CD4-positive, alpha-beta memory T cell (primary cell): ENCODE measurements at regions of chr1 and their contacts with region 1.

Region 1: GRCh38 chr1:111507411-111508201 is 4.2 kb upstream of the ADORA3 start:
- DNase-seq: peak; percentile 48 to 78 (median 49)
- H3K4me3 ChIP-seq: peak overlapping the region; percentile 31 to 50
- H3K4me3 Mint-ChIP-seq: peak overlapping the region; percentile 63 to 89 (median 86)
- H3K27ac ChIP-seq: peak overlapping the region; percentile 76
- H3K27ac Mint-ChIP-seq: peak overlapping the region in 6 of 7 donors; percentile 93 to 98 (median 96)
- H3K4me1 ChIP-seq: peaks cover 96% of the 10 kb centered on the region
- H3K4me1 Mint-ChIP-seq: peaks cover 41 to 61% (median 53%) of the 10 kb centered on the region in 4 donors
- H3K27me3 ChIP-seq: no peaks in the 10 kb centered on the region
- H3K27me3 Mint-ChIP-seq: no peaks in the 10 kb centered on the region

Region 2: GRCh38 chr1:111448918-111449702 is 58.5 kb before region 1 on chr1 and contains the starts of genes ATP5PB and WDR77:
- CTCF ChIA-PET with region 1: interaction called, 44 read pairs
- POLR2A ChIA-PET with region 1: interaction called, 45 read pairs
- intact Hi-C with region 1: loop called (anchors 2 kb)
- DNase-seq: peak; percentile 94 to 97 (median 96)
- H3K4me3 ChIP-seq: peak within 1 kb of the TSS; percentile 78 to 96
- H3K4me3 Mint-ChIP-seq: peak within 1 kb of the TSS; percentile 98 to 100 (median 99)
- H3K27ac ChIP-seq: peak within 1 kb of the TSS; percentile 91
- H3K27ac Mint-ChIP-seq: peak within 1 kb of the TSS; percentile 94 to 100 (median 99)
- H3K4me1 ChIP-seq: peaks cover 77% of the 10 kb centered on the region
- H3K4me1 Mint-ChIP-seq: peaks cover 57 to 87% (median 71%) of the 10 kb centered on the region in 4 donors
- H3K27me3 ChIP-seq: no peaks in the 10 kb centered on the region
- H3K27me3 Mint-ChIP-seq: no peaks in the 10 kb centered on the region
- total RNA-seq, gene ATP5PB: 103 to 112 TPM
- total RNA-seq, gene WDR77: 26.3 to 30.3 TPM

Region 3: GRCh38 chr1:111497592-111497991 is 10.0 kb before region 1 on chr1:
- CTCF ChIA-PET with region 1: interaction called, 43 read pairs
- POLR2A ChIA-PET with region 1: interaction called, 19 read pairs
- intact Hi-C with region 1: no loop called
- DNase-seq: no peak
- H3K4me3 ChIP-seq: no peak overlapping the region
- H3K4me3 Mint-ChIP-seq: peak overlapping the region in 1 of 8 donors; percentile 33
- H3K27ac ChIP-seq: no peak overlapping the region
- H3K27ac Mint-ChIP-seq: peak overlapping the region in 3 of 7 donors; percentile 23 to 66 (median 60)
- H3K4me1 ChIP-seq: peaks cover 13% of the 10 kb centered on the region
- H3K4me1 Mint-ChIP-seq: peaks cover 13 to 40% (median 27%) of the 10 kb centered on the region in 4 donors
- H3K27me3 ChIP-seq: no peaks in the 10 kb centered on the region
- H3K27me3 Mint-ChIP-seq: no peaks in the 10 kb centered on the region

Region 4: DNA sequence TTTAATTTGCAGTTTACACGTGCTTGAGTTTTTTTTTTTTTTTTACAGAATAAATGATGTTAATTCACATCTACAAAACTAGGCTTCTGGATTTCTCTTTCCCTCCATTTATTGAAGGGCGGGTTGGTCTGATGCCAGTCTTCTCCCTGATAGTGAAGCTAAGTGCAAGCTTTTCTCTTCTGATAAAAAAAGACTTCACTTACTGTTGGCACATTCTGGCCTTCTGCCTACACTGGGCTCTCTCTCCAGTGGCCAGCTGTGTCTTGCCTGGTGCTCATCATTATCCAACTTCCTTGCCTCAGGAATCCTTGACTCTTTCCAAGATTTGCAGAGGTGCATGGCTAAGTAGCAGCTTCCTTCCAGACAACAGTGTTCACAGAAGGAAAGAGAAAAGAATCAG is 104.4 kb after region 1 on chr1:
- CTCF ChIA-PET with region 1: interaction called, 21 read pairs
- POLR2A ChIA-PET with region 1: interaction called, 16 read pairs
- intact Hi-C with region 1: no loop called
- DNase-seq: no peak
- H3K4me3 ChIP-seq: no peak overlapping the region
- H3K4me3 Mint-ChIP-seq: no peak overlapping the region
- H3K27ac ChIP-seq: no peak overlapping the region
- H3K27ac Mint-ChIP-seq: peak overlapping the region in 2 of 7 donors; percentile 12 to 43
- H3K4me1 ChIP-seq: peaks cover 24% of the 10 kb centered on the region
- H3K4me1 Mint-ChIP-seq: peaks cover 20 to 44% (median 27%) of the 10 kb centered on the region in 4 donors
- H3K27me3 ChIP-seq: no peaks in the 10 kb centered on the region
- H3K27me3 Mint-ChIP-seq: no peaks in the 10 kb centered on the region

Region 5: DNA sequence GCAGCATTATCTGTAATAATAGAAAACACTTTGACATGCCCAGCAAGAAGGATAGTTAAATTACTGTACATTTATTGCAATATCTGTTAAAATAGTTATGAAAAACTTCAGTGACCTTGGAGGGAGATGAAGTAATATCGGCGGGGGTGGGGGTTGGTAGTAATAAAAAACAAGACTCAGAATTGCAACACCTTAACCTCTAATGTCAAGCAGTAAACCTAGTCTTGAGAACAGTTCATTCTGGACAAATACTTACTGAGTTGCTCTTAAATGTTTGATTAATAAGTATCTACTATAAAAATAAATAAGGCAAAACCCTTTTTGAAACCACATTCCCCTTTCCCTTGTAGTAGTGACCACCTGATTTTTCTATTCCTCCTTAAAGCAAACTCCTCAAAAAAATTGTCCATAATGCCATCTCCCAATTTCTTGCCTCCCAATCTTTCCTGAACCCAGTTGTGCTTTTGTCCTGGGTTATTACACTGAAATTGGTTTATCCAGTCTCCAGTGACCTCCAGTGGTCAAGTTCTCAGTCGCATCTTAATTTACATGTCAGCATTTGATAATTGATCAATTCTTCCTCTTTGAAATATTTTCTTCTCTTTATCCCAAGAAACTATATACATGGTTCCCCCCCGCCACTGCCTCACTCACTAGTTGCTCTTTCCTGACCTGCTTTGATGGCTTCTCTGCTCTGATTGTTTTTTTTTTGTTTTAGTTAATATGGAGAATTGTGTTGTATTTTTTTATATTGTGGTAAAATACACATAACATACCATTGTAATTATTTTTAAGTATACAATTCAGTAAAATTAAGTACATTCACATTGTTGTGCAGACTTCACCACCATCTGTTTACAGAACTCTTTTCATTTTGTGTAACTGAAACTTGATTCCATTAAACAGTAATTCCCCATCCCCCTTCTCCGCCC is 148.7 kb after region 1 on chr1:
- CTCF ChIA-PET with region 1: interaction called, 20 read pairs
- POLR2A ChIA-PET with region 1: interaction called, 9 read pairs
- intact Hi-C with region 1: loop called (anchors 1 kb)
- DNase-seq: peak in 4 of 5 donors; percentile 18 to 39 (median 36)
- H3K4me3 ChIP-seq: no peak overlapping the region
- H3K4me3 Mint-ChIP-seq: peak overlapping the region in 4 of 8 donors; percentile 16 to 53 (median 28)
- H3K27ac ChIP-seq: no peak overlapping the region
- H3K27ac Mint-ChIP-seq: peak overlapping the region in 5 of 7 donors; percentile 8 to 57 (median 45)
- H3K4me1 ChIP-seq: peaks cover 84% of the 10 kb centered on the region
- H3K4me1 Mint-ChIP-seq: peaks cover 38 to 51% (median 45%) of the 10 kb centered on the region in 4 donors
- H3K27me3 ChIP-seq: no peaks in the 10 kb centered on the region
- H3K27me3 Mint-ChIP-seq: no peaks in the 10 kb centered on the region

Region 6: GRCh38 chr1:111704776-111705175 is 197.2 kb after region 1 on chr1:
- CTCF ChIA-PET with region 1: interaction called, 60 read pairs
- POLR2A ChIA-PET with region 1: interaction called, 5 read pairs
- intact Hi-C with region 1: no loop called
- DNase-seq: no peak
- H3K4me3 ChIP-seq: no peak overlapping the region
- H3K4me3 Mint-ChIP-seq: no peak overlapping the region
- H3K27ac ChIP-seq: no peak overlapping the region
- H3K27ac Mint-ChIP-seq: peak overlapping the region in 1 of 7 donors; percentile 69
- H3K4me1 ChIP-seq: no peaks in the 10 kb centered on the region
- H3K4me1 Mint-ChIP-seq: peaks cover 8 to 17% (median 11%) of the 10 kb centered on the region in 4 donors
- H3K27me3 ChIP-seq: no peaks in the 10 kb centered on the region
- H3K27me3 Mint-ChIP-seq: no peaks in the 10 kb centered on the region

Region 7: DNA sequence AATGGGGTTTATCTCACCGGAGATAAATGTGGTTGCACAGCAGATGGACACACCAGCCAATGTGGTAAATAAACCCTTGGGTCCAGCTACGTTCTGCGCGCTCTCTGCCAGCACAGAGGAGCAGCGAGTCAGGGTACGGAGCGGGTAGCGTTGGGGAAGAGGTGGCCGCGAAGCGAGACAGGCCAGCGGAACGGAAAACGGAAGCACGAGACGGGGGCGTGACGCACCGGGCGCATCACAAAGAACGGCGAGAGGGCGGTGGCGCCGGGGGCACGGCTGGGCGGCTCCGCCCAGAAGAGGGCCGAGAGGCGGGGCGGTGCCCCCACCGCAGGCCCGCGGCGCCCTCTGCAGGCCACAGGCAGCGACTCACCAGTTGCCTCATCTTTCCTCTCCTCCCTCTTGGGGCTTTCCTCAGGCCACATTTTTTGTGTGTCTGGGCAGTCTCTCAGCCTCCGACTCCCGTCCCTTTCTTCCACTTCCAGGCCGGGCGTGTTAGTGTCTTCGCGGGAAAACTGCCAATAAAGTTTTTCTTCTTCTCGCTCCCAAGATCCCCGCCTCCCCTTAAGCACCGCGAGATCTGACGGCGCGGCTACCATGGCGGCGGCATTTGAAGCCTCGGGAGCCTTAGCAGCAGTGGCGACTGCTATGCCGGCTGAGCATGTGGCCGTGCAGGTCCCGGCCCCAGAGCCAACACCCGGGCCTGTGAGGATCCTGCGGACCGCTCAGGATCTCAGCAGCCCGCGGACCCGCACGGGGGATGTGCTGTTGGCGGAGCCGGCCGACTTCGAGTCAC is 247.9 kb after region 1 on chr1 and contains the start of gene DDX20:
- CTCF ChIA-PET with region 1: interaction called, 43 read pairs
- POLR2A ChIA-PET with region 1: interaction called, 27 read pairs
- intact Hi-C with region 1: loop called (anchors 2 kb)
- DNase-seq: peak; percentile 94 to 96 (median 95)
- H3K4me3 ChIP-seq: peak within 1 kb of the TSS; percentile 63 to 92
- H3K4me3 Mint-ChIP-seq: peak within 1 kb of the TSS; percentile 90 to 100 (median 98)
- H3K27ac ChIP-seq: peak within 1 kb of the TSS; percentile 93
- H3K27ac Mint-ChIP-seq: peak within 1 kb of the TSS; percentile 97 to 100 (median 99)
- H3K4me1 ChIP-seq: peaks cover 20% of the 10 kb centered on the region
- H3K4me1 Mint-ChIP-seq: peaks cover 26 to 36% (median 33%) of the 10 kb centered on the region in 4 donors
- H3K27me3 ChIP-seq: no peaks in the 10 kb centered on the region
- H3K27me3 Mint-ChIP-seq: peaks cover 0 to 2% of the 10 kb centered on the region in 2 donors
- total RNA-seq, gene DDX20: 22.2 to 26.0 TPM

Region 8: GRCh38 chr1:112169517-112169916 is 661.9 kb after region 1 on chr1:
- CTCF ChIA-PET with region 1: no interaction called
- POLR2A ChIA-PET with region 1: no interaction called
- intact Hi-C with region 1: no loop called
- DNase-seq: no peak
- H3K4me3 ChIP-seq: no peak overlapping the region
- H3K4me3 Mint-ChIP-seq: no peak overlapping the region
- H3K27ac ChIP-seq: no peak overlapping the region
- H3K27ac Mint-ChIP-seq: no peak overlapping the region
- H3K4me1 ChIP-seq: no peaks in the 10 kb centered on the region
- H3K4me1 Mint-ChIP-seq: no peaks in the 10 kb centered on the region
- H3K27me3 ChIP-seq: no peaks in the 10 kb centered on the region
- H3K27me3 Mint-ChIP-seq: peaks cover 6 to 14% of the 10 kb centered on the region in 2 donors